ENCODE measurements at regions of chr3 and their contacts with region 1.

Region 1: GRCh38 chr3:69671082-69671952 is 67.9 kb upstream of the MITF start:
- DNase-seq: no peak
- ATAC-seq: peak; percentile 69

Region 2: DNA sequence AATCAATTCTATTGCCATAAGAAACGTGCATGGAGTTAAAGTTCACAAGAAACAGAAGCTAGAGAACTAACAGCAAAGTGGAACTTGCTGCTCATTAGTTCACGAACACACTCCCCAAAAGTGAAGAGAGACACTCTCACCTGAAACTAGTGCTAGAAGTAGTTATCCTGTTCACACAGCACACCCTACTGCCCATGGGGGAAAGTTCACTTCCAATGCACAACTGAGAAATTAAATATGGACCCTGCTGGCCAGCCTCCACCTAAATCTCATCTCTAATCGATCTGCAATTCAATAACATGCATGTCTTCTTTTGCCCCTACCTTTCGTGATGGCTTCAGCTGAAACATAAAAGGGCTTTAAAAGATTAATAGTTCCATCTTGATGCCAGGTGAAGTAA is 246.1 kb before region 1 on chr3:
- intact Hi-C with region 1: loop called (anchors 5 kb)
- DNase-seq: no peak
- ATAC-seq: no peak

Measured in Right ventricle myocardium inferior (tissue), 1 donor.